Activated naive CD4-positive, alpha-beta T cell treated with anti-CD3 and anti-CD28 coated beads for 36 hours (primary cell): ENCODE measurements at regions of chr2 and their contacts with region 1.

Region 1: GRCh38 chr2:155250800-155251199 is 552.3 kb downstream of the KCNJ3 start:
- DNase-seq: no peak
- H3K4me3 Mint-ChIP-seq: no peak overlapping the region
- H3K27ac Mint-ChIP-seq: no peak overlapping the region
- H3K4me1 Mint-ChIP-seq: no peaks in the 10 kb centered on the region
- H3K27me3 Mint-ChIP-seq: no peaks in the 10 kb centered on the region

Region 2: GRCh38 chr2:154452906-154453493 is 797.8 kb before region 1 on chr2:
- CTCF ChIA-PET with region 1: no interaction called
- intact Hi-C with region 1: loop called (anchors 1 kb)
- DNase-seq: no peak
- H3K4me3 Mint-ChIP-seq: no peak overlapping the region
- H3K27ac Mint-ChIP-seq: no peak overlapping the region
- H3K4me1 Mint-ChIP-seq: no peaks in the 10 kb centered on the region
- H3K27me3 Mint-ChIP-seq: no peaks in the 10 kb centered on the region

Region 3: DNA sequence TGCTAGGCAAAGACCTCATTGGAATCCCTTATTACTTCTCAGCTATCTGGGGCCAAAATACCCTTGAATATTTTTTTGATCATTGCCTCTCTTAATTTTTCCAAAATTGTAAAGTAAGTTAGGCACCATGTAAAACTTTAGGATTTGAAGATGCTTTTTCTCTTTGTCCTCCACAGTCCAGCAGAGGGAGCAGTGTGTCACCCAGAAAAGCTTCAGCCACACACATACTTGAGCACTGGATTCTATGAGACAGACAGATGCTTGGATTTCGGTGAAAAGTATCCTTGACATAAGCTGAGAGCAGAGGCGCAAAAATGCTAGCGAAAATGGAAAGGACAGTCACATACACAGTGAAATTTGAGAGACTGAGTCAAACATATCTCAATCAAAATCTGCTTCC is 627.0 kb before region 1 on chr2:
- CTCF ChIA-PET with region 1: no interaction called
- intact Hi-C with region 1: loop called (anchors 10 kb)
- DNase-seq: peak; percentile 14
- H3K4me3 Mint-ChIP-seq: no peak overlapping the region
- H3K27ac Mint-ChIP-seq: no peak overlapping the region
- H3K4me1 Mint-ChIP-seq: no peaks in the 10 kb centered on the region
- H3K27me3 Mint-ChIP-seq: no peaks in the 10 kb centered on the region